ENCODE measurements at regions of chr2 and their contacts with region 1.

Region 1: DNA sequence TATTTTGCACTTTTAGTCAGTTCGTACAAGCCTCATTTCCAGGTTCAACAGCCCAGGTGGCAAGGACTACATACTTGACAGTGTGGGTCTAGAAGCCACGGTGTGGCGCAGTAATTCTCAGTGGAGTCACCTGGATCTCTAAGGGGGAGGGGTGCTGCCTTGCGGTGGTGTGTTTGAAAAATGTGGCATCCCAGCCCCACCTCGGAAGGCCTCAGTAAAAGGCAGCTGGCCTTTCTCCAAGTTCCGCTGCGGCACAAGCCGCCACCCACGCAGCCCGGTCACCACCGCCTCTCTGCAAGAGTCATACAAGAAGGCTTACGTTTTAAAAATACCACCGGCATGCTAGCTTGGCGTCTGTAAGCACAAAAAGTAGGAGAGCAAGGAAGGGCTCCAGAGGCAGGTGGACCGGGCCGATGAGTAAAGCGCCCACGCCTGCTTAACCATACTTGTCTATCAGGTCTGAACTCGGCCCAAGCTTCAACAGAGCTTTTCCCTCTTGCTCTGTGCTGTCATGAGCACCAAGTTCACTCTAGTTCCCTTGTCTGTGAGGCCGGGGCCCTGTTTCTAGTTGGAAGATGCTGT is 49.5 kb downstream of the SPRED2 start:
- DNase-seq: peak; percentile 97 to 98
- H3K4me3 ChIP-seq: peak overlapping the region; percentile 15; the same call in 1 of the 2 replicates
- H3K27ac ChIP-seq: peak overlapping the region; percentile 82
- H3K4me1 ChIP-seq: peaks cover 78% of the 10 kb centered on the region
- H3K27me3 ChIP-seq: no peaks in the 10 kb centered on the region
- CTCF ChIP-seq: peak; percentile 38; the same call in 1 of the 2 replicates

Region 2: GRCh38 chr2:64807417-64807816 is 575.5 kb before region 1 on chr2:
- CTCF ChIA-PET with region 1: no interaction called
- POLR2A ChIA-PET with region 1: no interaction called
- intact Hi-C with region 1: no loop called
- DNase-seq: peak; percentile 74 to 91
- H3K4me3 ChIP-seq: no peak overlapping the region
- H3K27ac ChIP-seq: no peak overlapping the region
- H3K4me1 ChIP-seq: peaks cover 12% of the 10 kb centered on the region
- H3K27me3 ChIP-seq: no peaks in the 10 kb centered on the region
- CTCF ChIP-seq: no peak

Region 3: DNA sequence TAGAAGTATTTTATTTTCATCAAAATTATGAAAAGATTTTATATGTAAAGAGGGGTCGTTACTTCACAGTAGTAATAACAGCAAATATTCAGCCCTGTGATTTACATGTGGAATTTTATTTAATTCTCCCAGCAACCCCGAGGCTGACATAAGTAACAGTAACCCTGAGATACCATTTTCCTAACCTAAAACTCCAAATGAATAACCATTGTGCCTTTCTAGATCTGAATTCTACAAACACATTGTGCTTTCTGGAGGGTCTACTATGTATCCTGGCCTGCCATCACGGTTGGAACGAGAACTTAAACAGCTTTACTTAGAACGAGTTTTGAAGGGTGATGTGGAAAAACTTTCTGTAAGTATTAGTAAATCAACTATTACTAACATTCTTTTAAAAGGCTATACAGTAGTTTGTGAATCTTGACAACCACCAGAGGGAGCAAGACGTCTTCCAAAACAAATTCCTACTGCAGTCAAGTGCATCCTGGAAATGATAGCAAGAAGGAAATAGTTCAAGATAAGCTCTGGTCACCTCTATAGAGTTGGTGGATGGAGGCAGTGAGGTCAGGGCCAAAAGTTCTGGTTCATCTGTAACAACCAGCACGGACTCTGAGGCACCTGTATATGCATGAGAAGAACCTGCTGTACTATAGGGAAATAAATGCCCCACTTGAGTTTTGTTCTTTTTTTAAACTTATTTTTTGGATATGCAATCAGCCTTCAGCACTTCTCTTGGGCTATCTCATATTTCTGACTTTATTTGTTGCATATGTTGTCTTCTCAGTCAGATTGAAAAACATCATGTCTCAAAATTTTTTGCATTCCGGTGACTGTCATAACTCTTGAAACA is 117.8 kb before region 1 on chr2:
- CTCF ChIA-PET with region 1: no interaction called
- POLR2A ChIA-PET with region 1: no interaction called
- intact Hi-C with region 1: loop called (anchors 2 kb)
- DNase-seq: peak; percentile 38 to 76
- H3K4me3 ChIP-seq: no peak overlapping the region
- H3K27ac ChIP-seq: no peak overlapping the region
- H3K4me1 ChIP-seq: peaks cover 9% of the 10 kb centered on the region; the same call in 1 of the 2 replicates
- H3K27me3 ChIP-seq: no peaks in the 10 kb centered on the region
- CTCF ChIP-seq: peak; percentile 92

Region 4: DNA sequence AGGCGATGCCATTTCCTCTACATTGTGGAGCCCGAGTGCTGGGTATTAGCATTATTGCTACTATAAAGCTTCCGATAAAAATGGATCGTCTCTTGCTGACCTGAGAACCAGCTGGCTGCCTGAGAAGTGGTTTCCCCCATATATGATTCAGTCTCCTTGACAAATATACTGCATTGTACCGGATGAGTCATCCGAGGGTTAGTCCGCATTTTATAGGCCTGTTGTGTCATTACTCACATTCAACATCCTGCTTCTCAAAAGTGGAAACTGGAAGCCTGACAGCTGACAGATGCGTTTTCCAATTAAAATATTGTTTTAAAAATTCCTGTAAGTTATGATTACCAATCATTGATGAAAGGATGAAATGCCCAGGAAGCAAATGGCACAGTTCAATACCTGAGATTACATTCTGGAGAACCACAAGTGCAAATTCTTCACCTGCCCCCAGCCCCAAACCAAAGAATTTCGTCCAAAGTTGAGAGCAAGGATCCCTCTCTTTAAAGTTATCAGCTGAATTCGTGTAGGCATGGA is 16.2 kb before region 1 on chr2:
- CTCF ChIA-PET with region 1: interaction called, 4 read pairs
- POLR2A ChIA-PET with region 1: interaction called, 6 read pairs
- intact Hi-C with region 1: loop called (anchors 2 kb)
- DNase-seq: peak; percentile 57 to 96
- H3K4me3 ChIP-seq: peak overlapping the region; percentile 48; the same call in 1 of the 2 replicates
- H3K27ac ChIP-seq: peak overlapping the region; percentile 76
- H3K4me1 ChIP-seq: peaks cover 49% of the 10 kb centered on the region
- H3K27me3 ChIP-seq: no peaks in the 10 kb centered on the region
- CTCF ChIP-seq: no peak

Region 5: GRCh38 chr2:65566620-65567019 is 183.8 kb after region 1 on chr2:
- CTCF ChIA-PET with region 1: no interaction called
- POLR2A ChIA-PET with region 1: interaction called, 6 read pairs
- intact Hi-C with region 1: loop called (anchors 2 kb)
- DNase-seq: peak; percentile 21 to 54
- H3K4me3 ChIP-seq: peak overlapping the region; percentile 24; the same call in 1 of the 2 replicates
- H3K27ac ChIP-seq: 0 out of 2 replicates have a peak overlapping the region, but pooled peaks have one; percentile 31
- H3K4me1 ChIP-seq: peaks cover 10% of the 10 kb centered on the region; the same call in 1 of the 2 replicates
- H3K27me3 ChIP-seq: no peaks in the 10 kb centered on the region
- CTCF ChIP-seq: no peak